Esophagus squamous epithelium (tissue), 5 donors: ENCODE measurements at regions of chr15 and their contacts with region 1.

Region 1: GRCh38 chr15:90071208-90071807 is 31.0 kb downstream of the IDH2 start:
- DNase-seq: peak; percentile 33
- H3K4me3 ChIP-seq: no peak overlapping the region
- H3K27ac ChIP-seq: peak overlapping the region in 1 of 4 donors; percentile 55
- H3K4me1 ChIP-seq: peaks cover 17 to 50% (median 23%) of the 10 kb centered on the region in 3 donors
- H3K27me3 ChIP-seq: no peaks in the 10 kb centered on the region
- CTCF ChIP-seq: peak; percentile 68 to 85 (median 80)
- POLR2A ChIP-seq: no peak

Region 2: GRCh38 chr15:89898614-89899294 is 172.6 kb before region 1 on chr15:
- intact Hi-C with region 1: loop called (anchors 5 kb)
- DNase-seq: no peak
- H3K4me3 ChIP-seq: no peak overlapping the region
- H3K27ac ChIP-seq: no peak overlapping the region
- H3K4me1 ChIP-seq: peaks cover 0 to 17% (median 5%) of the 10 kb centered on the region in 3 donors
- H3K27me3 ChIP-seq: no peaks in the 10 kb centered on the region
- CTCF ChIP-seq: peak; percentile 52 to 95 (median 82)
- POLR2A ChIP-seq: no peak

Region 3: DNA sequence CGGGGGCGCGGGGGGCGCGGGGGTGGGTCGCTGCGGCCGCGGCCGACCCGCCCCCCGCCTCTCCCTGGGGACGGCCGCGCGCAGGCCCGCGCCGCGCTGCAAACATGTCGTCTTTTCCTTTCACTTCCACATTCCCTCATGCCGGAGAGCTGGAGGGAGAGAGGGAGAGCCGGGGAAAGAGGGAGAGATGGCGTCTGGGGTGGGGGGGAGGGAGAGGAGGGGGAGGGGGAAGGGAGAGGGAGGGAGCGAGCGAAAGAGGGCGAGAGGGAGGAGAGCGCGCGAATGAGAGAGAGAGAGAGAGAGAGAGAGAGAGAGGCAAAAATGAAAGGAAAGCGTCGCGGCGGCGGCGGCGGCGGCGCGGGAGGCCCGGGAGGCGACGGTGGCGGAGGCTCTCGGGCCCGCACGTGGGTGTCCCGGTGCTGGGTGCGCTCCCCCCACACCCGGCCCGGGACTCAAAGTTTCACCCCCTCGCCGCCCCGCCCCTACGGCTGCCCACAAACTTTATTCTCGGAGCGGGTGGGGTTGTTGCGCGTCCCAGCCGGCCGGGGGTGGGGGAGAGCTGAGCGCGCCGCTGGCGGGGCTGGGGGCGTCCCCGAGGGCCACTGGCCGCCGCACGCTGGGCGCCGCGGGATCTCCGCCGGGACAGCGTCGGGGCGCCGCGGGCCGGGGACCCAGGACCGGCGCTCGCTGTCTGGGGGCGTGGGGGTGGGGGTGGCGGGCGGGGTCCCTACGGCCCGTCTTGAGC is 69.5 kb before region 1 on chr15:
- intact Hi-C with region 1: loop called (anchors 10 kb)
- DNase-seq: no peak
- H3K4me3 ChIP-seq: peak overlapping the region; percentile 59 to 90 (median 68)
- H3K27ac ChIP-seq: peak overlapping the region; percentile 89 to 97 (median 92)
- H3K4me1 ChIP-seq: peaks cover 51 to 79% (median 56%) of the 10 kb centered on the region in 3 donors
- H3K27me3 ChIP-seq: no peaks in the 10 kb centered on the region
- CTCF ChIP-seq: no peak
- POLR2A ChIP-seq: no peak

Region 4: DNA sequence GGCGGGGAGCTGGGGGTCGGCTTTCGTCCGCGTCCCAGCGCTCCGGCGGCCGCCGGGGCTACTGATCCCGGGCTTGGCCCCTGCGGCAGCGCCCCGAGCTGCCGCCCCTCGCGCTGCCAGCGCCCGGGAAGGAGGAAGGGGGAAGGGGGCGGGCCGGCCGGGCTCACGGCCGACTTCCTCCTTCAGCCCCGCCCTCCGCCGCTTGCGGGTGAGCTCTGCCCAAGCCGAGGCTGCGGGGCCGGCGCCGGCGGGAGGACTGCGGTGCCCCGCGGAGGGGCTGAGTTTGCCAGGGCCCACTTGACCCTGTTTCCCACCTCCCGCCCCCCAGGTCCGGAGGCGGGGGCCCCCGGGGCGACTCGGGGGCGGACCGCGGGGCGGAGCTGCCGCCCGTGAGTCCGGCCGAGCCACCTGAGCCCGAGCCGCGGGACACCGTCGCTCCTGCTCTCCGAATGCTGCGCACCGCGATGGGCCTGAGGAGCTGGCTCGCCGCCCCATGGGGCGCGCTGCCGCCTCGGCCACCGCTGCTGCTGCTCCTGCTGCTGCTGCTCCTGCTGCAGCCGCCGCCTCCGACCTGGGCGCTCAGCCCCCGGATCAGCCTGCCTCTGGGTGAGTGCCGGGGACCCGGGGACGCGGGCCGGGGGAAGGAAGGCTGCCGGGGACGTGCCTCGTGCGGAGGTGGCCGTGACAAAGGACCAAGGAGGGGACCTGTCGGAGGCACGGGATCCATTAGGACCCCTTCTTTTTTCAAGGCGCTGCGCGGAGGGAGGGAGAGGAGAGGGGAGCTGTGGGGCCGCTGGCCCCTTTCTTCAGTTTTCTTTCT is 130.0 kb after region 1 on chr15 and contains the start of gene SEMA4B:
- intact Hi-C with region 1: no loop called
- DNase-seq: no peak
- H3K4me3 ChIP-seq: peak within 1 kb of the TSS; percentile 68 to 91 (median 73)
- H3K27ac ChIP-seq: peak within 1 kb of the TSS; percentile 93 to 96 (median 94)
- H3K4me1 ChIP-seq: peaks cover 30 to 86% (median 46%) of the 10 kb centered on the region in 3 donors
- H3K27me3 ChIP-seq: no peaks in the 10 kb centered on the region
- CTCF ChIP-seq: no peak
- POLR2A ChIP-seq: peak in 2 of 4 donors; percentile 70 to 79
- total RNA-seq, gene SEMA4B: 87.9 to 209 (median 136) TPM

Region 5: GRCh38 chr15:90219421-90220166 is 148.3 kb after region 1 on chr15:
- intact Hi-C with region 1: no loop called
- DNase-seq: no peak
- H3K4me3 ChIP-seq: no peak overlapping the region
- H3K27ac ChIP-seq: peak overlapping the region in 3 of 4 donors; percentile 44 to 96 (median 93)
- H3K4me1 ChIP-seq: peaks cover 20 to 81% (median 22%) of the 10 kb centered on the region in 3 donors
- H3K27me3 ChIP-seq: no peaks in the 10 kb centered on the region
- CTCF ChIP-seq: peak; percentile 42 to 66 (median 61)
- POLR2A ChIP-seq: no peak